ENCODE measurements at regions of chr15 and their contacts with region 1.

Region 1: GRCh38 chr15:96356494-96357455 is 26.3 kb downstream of the NR2F2 start:
- DNase-seq: peak; percentile 96
- H3K4me3 Mint-ChIP-seq: no peak overlapping the region
- H3K27ac Mint-ChIP-seq: no peak overlapping the region
- H3K4me1 Mint-ChIP-seq: peaks cover 32% of the 10 kb centered on the region
- H3K27me3 Mint-ChIP-seq: no peaks in the 10 kb centered on the region
- CTCF ChIP-seq: peak; percentile 97

Region 2: GRCh38 chr15:96330450-96331145 is 26.2 kb before region 1 on chr15 and contains the start of gene NR2F2:
- CTCF ChIA-PET with region 1: interaction called, 28 read pairs
- intact Hi-C with region 1: loop called (anchors 2 kb)
- DNase-seq: peak; percentile 98
- H3K4me3 Mint-ChIP-seq: no peak within 1 kb of the TSS
- H3K27ac Mint-ChIP-seq: peak within 1 kb of the TSS; percentile 98
- H3K4me1 Mint-ChIP-seq: peaks cover 22% of the 10 kb centered on the region
- H3K27me3 Mint-ChIP-seq: no peaks in the 10 kb centered on the region
- CTCF ChIP-seq: no peak
- total RNA-seq, gene NR2F2: 158 and 167 TPM in 2 replicates

Region 3: GRCh38 chr15:96416934-96417759 is 60.4 kb after region 1 on chr15:
- CTCF ChIA-PET with region 1: interaction called, 5 read pairs
- intact Hi-C with region 1: loop called (anchors 2 kb)
- DNase-seq: peak; percentile 53
- H3K4me3 Mint-ChIP-seq: peak overlapping the region; percentile 70
- H3K27ac Mint-ChIP-seq: peak overlapping the region; percentile 78
- H3K4me1 Mint-ChIP-seq: peaks cover 68% of the 10 kb centered on the region
- H3K27me3 Mint-ChIP-seq: no peaks in the 10 kb centered on the region
- CTCF ChIP-seq: no peak

Region 4: DNA sequence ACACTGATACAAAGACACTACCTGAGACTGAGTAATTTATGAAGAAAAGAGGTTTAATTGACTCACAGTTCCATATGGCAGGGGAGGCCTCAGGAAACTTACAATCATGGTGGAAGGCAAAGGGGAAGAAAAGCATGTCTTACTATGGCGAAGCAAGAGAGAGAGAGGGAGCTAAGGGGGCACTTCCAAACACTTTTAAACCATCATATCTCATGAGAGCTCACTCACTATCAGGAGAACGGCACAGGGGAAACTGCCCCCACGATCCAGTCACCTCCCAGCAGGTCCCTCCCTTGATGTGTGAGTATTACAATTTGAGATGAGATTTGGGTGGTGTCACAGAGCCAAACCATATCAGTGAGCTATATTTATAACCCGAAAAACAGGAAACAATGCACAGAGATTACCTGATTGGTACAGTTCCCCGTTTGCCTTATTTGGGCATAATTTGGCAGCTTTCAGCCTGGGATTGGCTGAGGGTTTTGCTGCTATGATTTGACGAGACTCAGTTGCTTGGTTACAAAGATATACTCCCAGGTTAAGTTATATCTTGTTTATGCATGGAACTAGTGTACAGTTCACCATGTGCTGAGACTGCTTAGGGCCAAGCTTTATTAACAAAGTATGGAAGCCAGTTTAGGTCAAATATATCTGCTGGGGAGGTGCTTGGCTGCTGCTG is 158.0 kb after region 1 on chr15:
- CTCF ChIA-PET with region 1: no interaction called
- intact Hi-C with region 1: loop called (anchors 5 kb)
- DNase-seq: peak; percentile 13
- H3K4me3 Mint-ChIP-seq: no peak overlapping the region
- H3K27ac Mint-ChIP-seq: peak overlapping the region; percentile 28
- H3K4me1 Mint-ChIP-seq: peaks cover 23% of the 10 kb centered on the region
- H3K27me3 Mint-ChIP-seq: no peaks in the 10 kb centered on the region
- CTCF ChIP-seq: no peak

Region 5: DNA sequence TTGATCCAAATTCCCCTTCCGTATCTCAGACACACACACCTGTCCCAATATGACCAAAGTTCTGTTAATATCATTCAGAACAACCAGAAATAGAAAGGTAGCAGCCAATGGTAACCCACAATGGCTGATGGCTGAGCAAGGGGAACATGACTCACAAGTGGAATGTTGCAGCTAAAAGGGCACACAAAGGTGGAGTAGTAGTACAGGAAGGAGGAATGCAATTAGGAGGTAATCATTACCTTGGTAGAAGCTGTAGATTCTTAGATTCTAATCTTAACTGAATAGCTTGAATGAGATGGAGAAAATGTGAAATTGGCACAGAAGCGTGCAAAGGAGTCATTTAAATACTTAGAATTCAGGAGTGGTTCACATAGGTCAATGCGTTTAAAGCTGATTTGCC is 321.6 kb after region 1 on chr15:
- CTCF ChIA-PET with region 1: no interaction called
- intact Hi-C with region 1: loop called (anchors 5 kb)
- DNase-seq: peak; percentile 72
- H3K4me3 Mint-ChIP-seq: no peak overlapping the region
- H3K27ac Mint-ChIP-seq: peak overlapping the region; percentile 62
- H3K4me1 Mint-ChIP-seq: peaks cover 19% of the 10 kb centered on the region
- H3K27me3 Mint-ChIP-seq: no peaks in the 10 kb centered on the region
- CTCF ChIP-seq: no peak

Region 6: GRCh38 chr15:96893159-96893906 is 536.6 kb after region 1 on chr15:
- CTCF ChIA-PET with region 1: interaction called, 5 read pairs
- intact Hi-C with region 1: loop called (anchors 1 kb)
- DNase-seq: peak; percentile 61
- H3K4me3 Mint-ChIP-seq: peak overlapping the region; percentile 60
- H3K27ac Mint-ChIP-seq: peak overlapping the region; percentile 68
- H3K4me1 Mint-ChIP-seq: peaks cover 20% of the 10 kb centered on the region
- H3K27me3 Mint-ChIP-seq: no peaks in the 10 kb centered on the region
- CTCF ChIP-seq: peak; percentile 69

Region 7: DNA sequence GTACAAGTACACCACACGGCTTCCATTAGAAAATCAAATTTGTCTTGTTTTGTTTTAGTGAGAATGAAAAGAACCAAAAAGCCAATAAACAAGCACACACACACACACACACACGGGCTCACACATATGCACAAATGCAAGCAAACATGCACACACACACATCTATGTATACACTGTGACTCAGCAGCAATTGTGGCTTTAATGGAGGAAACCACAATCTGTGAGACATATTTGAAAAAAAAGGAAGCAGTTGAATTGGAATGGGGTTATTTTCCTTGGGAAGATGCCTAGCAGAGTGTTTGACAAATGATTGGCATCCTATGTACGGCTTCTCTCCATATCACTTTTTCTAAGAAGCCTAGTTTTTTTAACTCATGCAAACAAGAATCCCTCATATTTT is 1402.6 kb after region 1 on chr15:
- CTCF ChIA-PET with region 1: no interaction called
- intact Hi-C with region 1: loop called (anchors 5 kb)
- DNase-seq: no peak
- H3K4me3 Mint-ChIP-seq: no peak overlapping the region
- H3K27ac Mint-ChIP-seq: no peak overlapping the region
- H3K4me1 Mint-ChIP-seq: peaks cover 8% of the 10 kb centered on the region
- H3K27me3 Mint-ChIP-seq: no peaks in the 10 kb centered on the region
- CTCF ChIP-seq: no peak